ENCODE measurements at regions of chr5 and their contacts with region 1.

Region 1: DNA sequence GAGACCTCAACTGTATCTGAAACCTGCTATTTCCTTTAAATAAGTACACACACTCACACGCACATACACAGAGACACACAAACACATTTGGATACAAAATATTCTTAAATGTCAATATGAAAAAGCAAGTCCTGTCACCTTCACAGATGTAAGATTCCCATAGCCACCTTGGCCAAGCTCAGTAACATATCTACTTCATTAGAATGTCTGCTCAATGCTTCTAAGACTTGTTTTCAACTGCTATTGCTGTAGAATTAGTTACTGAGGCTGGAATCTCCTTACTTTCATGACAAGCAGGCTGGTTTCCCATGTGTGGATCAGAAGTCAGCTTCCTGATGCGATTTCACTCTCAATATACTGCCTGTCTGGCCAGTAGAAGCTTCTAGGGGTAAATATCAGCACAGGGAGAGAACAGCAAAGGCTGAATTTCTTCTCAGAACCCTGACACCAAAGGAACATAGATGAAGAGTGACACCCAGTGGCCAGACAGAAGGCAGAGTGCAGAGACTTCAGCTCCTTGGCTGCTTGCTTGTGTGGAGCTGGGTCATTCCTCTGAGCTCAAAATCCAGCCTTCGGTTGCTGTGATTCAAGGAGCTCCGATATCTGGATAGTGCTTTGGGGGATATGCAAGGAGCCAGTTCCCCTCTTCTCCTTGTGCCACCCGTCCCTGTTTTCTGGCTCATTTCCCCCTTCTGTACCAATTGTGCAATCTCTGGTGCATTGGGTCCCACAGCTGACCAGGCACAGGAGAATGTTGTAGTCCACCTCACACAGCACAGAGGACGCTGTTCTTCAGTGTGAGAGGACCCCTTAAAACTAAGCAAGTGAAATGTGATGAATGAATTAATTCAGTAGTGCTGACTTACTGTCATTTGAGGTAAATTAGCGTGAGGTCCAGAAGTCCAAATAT is 26.6 kb upstream of the ABLIM3 start:
- DNase-seq: peak in 1 of 5 donors; percentile 25
- H3K4me3 ChIP-seq: no peak overlapping the region
- H3K27ac ChIP-seq: no peak overlapping the region
- H3K4me1 ChIP-seq: no peaks in the 10 kb centered on the region
- H3K27me3 ChIP-seq: no peaks in the 10 kb centered on the region
- CTCF ChIP-seq: no peak
- EP300 ChIP-seq: no peak
- POLR2A ChIP-seq: no peak

Region 2: DNA sequence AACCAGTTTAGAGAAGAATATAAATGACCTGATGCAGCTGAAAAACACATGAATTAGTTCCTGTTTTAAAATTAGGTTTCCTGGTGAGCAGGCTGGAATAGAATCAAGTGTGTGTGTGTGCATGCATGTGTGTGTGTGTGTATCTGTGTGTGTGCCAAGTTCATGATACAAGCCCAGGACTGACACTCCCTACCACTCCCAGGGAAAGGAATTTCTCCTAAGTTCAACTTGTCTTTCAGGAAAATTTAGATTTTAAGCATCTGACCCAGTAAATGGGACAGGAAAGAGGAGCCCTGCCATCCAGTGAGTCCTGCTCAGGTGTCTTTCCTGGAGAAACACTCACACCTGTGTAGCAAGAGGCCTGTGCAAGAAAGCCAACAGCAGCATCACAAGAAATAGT is 40.6 kb before region 1 on chr5:
- intact Hi-C with region 1: no loop called
- DNase-seq: no peak
- H3K4me3 ChIP-seq: no peak overlapping the region
- H3K27ac ChIP-seq: no peak overlapping the region
- H3K4me1 ChIP-seq: no peaks in the 10 kb centered on the region
- H3K27me3 ChIP-seq: no peaks in the 10 kb centered on the region
- CTCF ChIP-seq: no peak
- EP300 ChIP-seq: no peak
- POLR2A ChIP-seq: no peak

Region 3: GRCh38 chr5:150710165-150710564 is 1595.5 kb after region 1 on chr5:
- intact Hi-C with region 1: loop called in 1 of 4 experiments (anchors 10 kb)
- DNase-seq: no peak
- H3K4me3 ChIP-seq: no peak overlapping the region
- H3K27ac ChIP-seq: no peak overlapping the region
- H3K4me1 ChIP-seq: no peaks in the 10 kb centered on the region
- H3K27me3 ChIP-seq: no peaks in the 10 kb centered on the region
- CTCF ChIP-seq: no peak
- EP300 ChIP-seq: no peak
- POLR2A ChIP-seq: no peak

Measured in ovary (tissue), 10 donors.